Body of pancreas (tissue), 4 donors: ENCODE measurements at regions of chr19 and their contacts with region 1.

Region 1: GRCh38 chr19:13861732-13862531 is 15.0 kb upstream of the NANOS3 start:
- DNase-seq: peak; percentile 93 to 94 (median 94)
- ATAC-seq: peak; percentile 89
- H3K4me3 ChIP-seq: no peak overlapping the region
- H3K27ac ChIP-seq: peak overlapping the region; percentile 81 to 90 (median 84)
- H3K4me1 ChIP-seq: peaks cover 27% of the 10 kb centered on the region
- H3K27me3 ChIP-seq: no peaks in the 10 kb centered on the region
- CTCF ChIP-seq: peak; percentile 96 to 99 (median 99)
- POLR2A ChIP-seq: peak; percentile 11 to 66 (median 51)

Region 2: DNA sequence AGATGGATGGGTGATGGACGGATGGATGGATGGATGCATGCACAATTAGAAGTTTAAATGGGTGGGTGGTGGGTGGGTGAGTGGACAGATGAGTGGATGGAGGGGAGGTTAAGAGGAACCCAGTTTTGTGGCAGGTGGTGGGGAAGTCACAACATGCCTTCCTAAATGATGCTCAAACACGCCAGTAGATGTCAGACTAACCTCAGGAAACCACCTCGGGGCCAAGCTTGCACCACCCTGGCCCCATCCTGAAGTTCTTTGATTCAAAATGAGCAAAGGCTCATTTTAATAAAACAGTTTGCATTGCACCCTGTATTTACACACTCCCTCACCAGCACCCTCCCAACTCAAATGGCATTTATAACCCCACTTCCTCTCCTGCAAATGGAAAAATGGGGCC is 264.3 kb before region 1 on chr19:
- intact Hi-C with region 1: loop called (anchors 5 kb)
- DNase-seq: peak; percentile 25 to 55 (median 50)
- ATAC-seq: peak; percentile 64
- H3K4me3 ChIP-seq: no peak overlapping the region
- H3K27ac ChIP-seq: no peak overlapping the region
- H3K4me1 ChIP-seq: no peaks in the 10 kb centered on the region
- H3K27me3 ChIP-seq: peaks cover 0 to 3% of the 10 kb centered on the region in 2 donors
- CTCF ChIP-seq: peak; percentile 28 to 64 (median 56)
- POLR2A ChIP-seq: no peak

Region 3: DNA sequence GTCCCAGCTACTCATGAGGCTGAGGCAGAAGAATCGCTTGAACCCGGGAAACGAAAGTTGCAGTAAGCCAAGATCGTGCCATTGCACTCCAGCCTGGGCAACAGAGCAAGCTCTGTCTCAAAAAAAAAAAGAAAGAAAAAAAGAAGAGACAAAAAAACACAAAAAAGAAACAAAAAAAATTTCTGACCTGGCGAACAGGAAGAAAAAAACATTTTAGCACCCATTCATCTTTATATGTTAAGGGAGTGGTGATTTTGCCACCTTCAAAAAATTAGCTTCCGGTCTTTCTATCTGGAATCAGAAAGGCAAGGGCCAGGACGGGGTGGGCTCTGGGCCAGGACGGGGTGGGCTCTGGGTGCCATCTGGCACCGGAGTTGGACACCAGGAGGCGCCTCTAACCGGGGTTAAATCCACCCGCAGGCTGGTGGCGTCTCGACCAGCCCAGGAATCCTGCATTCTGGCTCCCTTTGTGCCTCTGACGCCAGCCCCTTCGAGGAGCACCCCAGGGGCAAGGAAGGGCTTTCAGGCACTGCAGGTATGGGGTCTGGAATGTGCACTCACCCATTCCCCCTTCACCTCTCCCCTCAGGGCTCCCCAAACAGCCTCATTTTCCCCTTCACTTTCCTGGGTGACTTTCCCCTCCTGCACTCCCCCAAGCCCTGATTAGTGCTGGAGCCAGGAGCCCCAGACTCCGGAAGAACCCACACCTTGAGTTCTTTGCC is 77.0 kb before region 1 on chr19:
- intact Hi-C with region 1: loop called (anchors 5 kb)
- DNase-seq: peak; percentile 81 to 89 (median 84)
- ATAC-seq: peak; percentile 84
- H3K4me3 ChIP-seq: no peak overlapping the region
- H3K27ac ChIP-seq: peak overlapping the region in 1 of 4 donors; percentile 50
- H3K4me1 ChIP-seq: peaks cover 13% of the 10 kb centered on the region
- H3K27me3 ChIP-seq: no peaks in the 10 kb centered on the region
- CTCF ChIP-seq: peak; percentile 59 to 78 (median 73)
- POLR2A ChIP-seq: no peak